BJ (cell line): ENCODE measurements at regions of chr7 and their contacts with region 1.

Region 1: DNA sequence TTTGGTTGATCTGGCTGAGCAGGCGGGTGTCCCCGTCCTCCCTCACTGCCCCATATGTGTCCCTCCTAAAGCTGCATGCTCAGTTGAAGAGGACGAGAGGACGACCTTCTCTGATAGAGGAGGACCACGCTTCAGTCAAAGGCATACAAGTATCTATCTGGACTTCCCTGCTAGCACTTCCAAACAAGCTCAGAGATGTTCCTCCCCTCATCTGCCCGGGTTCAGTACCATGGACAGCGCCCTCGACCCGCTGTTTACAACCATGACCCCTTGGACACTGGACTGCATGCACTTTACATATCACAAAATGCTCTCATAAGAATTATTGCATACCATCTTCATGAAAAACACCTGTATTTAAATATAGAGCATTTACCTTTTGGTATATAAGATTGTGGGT is 26.9 kb upstream of the TRIM56 start:
- DNase-seq: no peak
- H3K4me3 ChIP-seq: no peak overlapping the region
- H3K27me3 ChIP-seq: peaks cover 8% of the 10 kb centered on the region
- CTCF ChIP-seq: no peak

Region 2: DNA sequence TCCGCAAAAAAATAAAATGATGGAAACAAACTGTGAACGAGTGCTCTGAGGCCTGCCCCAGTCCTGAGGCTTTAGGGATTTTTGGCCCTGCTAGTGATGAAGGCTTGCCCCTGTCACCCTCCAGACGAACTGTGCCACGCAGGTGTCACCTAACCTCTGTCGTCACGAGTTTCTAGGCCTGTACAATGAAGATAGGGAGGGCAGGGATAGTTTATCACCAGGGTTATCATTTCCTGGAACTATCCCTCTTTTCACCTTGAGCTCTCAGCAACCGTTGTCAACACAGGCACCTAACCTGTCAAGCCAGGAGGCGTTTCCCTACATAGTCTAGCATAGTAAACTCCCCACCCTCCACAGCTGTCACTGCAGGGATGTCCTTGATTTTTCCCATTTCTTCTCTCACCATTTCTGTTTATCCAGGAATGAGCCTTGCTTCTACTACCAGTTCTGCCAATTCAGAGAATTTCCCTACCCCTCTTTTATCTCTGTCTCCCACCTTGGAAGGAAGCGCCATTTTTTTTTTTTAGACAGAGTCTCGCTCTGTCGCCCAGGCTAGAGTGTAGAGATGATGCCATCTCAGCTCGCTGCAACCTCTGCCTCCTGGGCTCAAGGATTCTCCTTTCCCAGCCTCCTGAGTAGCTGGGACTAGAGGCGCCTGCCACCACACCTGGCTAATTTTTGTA is 160.4 kb before region 1 on chr7:
- CTCF ChIA-PET with region 1: interaction called, 40 read pairs
- POLR2A ChIA-PET with region 1: no interaction called
- DNase-seq: no peak
- H3K4me3 ChIP-seq: no peak overlapping the region
- H3K27me3 ChIP-seq: peaks cover 16% of the 10 kb centered on the region
- CTCF ChIP-seq: no peak

Region 3: GRCh38 chr7:101077303-101078089 is 19.1 kb after region 1 on chr7:
- CTCF ChIA-PET with region 1: interaction called, 16 read pairs
- POLR2A ChIA-PET with region 1: no interaction called
- DNase-seq: no peak
- H3K4me3 ChIP-seq: no peak overlapping the region
- H3K27me3 ChIP-seq: no peaks in the 10 kb centered on the region; the same call in 1 of the 2 replicates
- CTCF ChIP-seq: peak; percentile 98